ENCODE measurements at regions of chr15 and their contacts with region 1.

Region 1: DNA sequence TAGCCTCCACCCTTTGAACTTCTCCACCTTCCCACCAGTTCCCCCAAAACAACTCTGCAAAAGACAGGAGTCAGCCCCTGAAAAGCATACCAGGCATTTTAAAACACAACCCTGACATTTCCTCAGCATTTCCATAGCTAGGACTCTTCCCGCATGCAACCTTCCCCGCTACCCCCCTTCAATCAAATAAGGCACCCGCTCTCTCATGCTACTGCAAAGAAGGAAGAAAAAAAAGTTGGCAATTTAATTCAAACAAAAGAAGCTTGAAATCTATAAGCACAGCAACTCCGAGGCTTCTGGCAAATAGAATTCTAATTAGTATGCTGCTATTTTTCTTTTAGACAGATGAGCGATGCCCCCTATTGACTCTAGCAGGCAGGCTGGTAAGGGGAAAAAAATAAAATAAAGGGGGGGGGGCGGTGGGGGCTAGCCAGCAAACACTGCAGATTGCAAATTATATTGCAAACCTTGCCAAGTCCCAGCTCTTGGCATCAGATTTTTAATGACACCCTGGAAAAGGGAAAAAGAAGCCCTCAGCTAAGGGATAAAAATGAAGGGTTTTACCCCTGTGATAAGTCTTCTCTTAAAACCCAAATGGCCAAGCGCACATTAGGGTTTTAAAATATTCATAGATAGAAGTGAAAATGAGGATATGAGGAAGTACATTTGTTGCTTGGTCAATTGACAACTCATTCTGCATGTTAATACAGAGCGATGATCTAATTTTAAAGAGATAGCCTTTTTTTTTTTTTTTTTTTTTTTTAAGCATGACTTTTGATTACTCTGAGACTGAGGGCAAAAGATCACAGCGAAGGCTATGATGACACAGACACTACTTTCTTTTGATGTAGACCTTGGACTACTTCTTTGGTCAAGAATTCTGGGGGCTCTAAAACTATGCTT is 255.2 kb downstream of the NR2F2 start:
- DNase-seq: no peak
- H3K4me3 ChIP-seq: no peak overlapping the region
- H3K27ac ChIP-seq: no peak overlapping the region
- H3K4me1 ChIP-seq: no peaks in the 10 kb centered on the region
- H3K27me3 ChIP-seq: peaks cover 4% of the 10 kb centered on the region
- CTCF ChIP-seq: peak; percentile 12 to 39

Region 2: GRCh38 chr15:95826412-95827195 is 759.1 kb before region 1 on chr15:
- CTCF ChIA-PET with region 1: interaction called, 45 read pairs
- dilution Hi-C with region 1: no loop called
- in situ Hi-C with region 1: no loop called
- intact Hi-C with region 1: no loop called
- DNase-seq: peak; percentile 26
- H3K4me3 ChIP-seq: no peak overlapping the region
- H3K27ac ChIP-seq: no peak overlapping the region
- H3K4me1 ChIP-seq: no peaks in the 10 kb centered on the region
- H3K27me3 ChIP-seq: peaks cover 3% of the 10 kb centered on the region
- CTCF ChIP-seq: peak; percentile 31 to 64

Region 3: GRCh38 chr15:95929232-95929846 is 656.4 kb before region 1 on chr15:
- CTCF ChIA-PET with region 1: no interaction called
- dilution Hi-C with region 1: no loop called
- in situ Hi-C with region 1: no loop called
- intact Hi-C with region 1: loop called (anchors 10 kb)
- DNase-seq: peak; percentile 26
- H3K4me3 ChIP-seq: no peak overlapping the region
- H3K27ac ChIP-seq: no peak overlapping the region
- H3K4me1 ChIP-seq: no peaks in the 10 kb centered on the region
- H3K27me3 ChIP-seq: no peaks in the 10 kb centered on the region
- CTCF ChIP-seq: no peak

Region 4: GRCh38 chr15:96392380-96393208 is 193.1 kb before region 1 on chr15:
- CTCF ChIA-PET with region 1: no interaction called
- dilution Hi-C with region 1: no loop called
- in situ Hi-C with region 1: loop called in 1 of 2 experiments (anchors 25 kb)
- intact Hi-C with region 1: no loop called
- DNase-seq: no peak
- H3K4me3 ChIP-seq: no peak overlapping the region
- H3K27ac ChIP-seq: no peak overlapping the region
- H3K4me1 ChIP-seq: no peaks in the 10 kb centered on the region
- H3K27me3 ChIP-seq: no peaks in the 10 kb centered on the region
- CTCF ChIP-seq: no peak

Region 5: DNA sequence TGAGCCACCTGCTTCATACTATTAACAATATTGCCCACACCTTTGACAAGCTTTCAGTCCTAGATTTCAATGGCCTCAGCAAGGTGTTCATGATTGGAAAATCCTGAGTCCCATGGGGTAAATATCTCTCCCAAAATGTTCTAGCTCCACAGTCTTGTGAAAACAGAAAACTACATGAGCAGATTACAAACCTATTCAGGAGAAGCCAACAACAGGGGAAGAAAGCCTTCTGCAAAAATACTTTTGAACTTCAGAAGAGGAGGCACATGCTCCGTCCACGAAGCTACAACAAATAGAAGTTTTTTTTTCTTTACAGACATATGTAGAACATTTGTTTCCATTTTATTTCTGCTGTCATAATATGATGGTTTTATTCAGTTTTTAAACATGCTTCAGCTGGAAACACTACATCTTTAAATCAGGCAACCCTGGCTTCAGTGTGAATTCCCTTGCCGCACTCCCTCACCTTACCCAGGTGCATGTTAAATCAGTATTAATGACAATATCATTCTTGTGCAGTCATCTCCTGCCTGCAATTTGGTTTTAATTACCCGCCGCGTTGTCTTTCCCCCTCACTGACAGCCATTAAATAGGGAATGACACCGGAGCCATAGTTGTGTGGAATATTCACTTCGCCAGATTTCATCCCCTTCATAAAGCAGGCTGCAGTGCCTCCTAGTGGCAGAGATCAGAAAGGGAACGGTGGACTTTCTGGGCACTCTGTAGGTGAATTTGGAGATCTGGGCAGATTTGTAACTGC is 649.3 kb after region 1 on chr15:
- CTCF ChIA-PET with region 1: no interaction called
- dilution Hi-C with region 1: no loop called
- in situ Hi-C with region 1: no loop called
- intact Hi-C with region 1: loop called (anchors 10 kb)
- DNase-seq: peak; percentile 35
- H3K4me3 ChIP-seq: no peak overlapping the region
- H3K27ac ChIP-seq: no peak overlapping the region
- H3K4me1 ChIP-seq: no peaks in the 10 kb centered on the region
- H3K27me3 ChIP-seq: no peaks in the 10 kb centered on the region
- CTCF ChIP-seq: peak; percentile 87 to 88